IMR-90 (cell line): ENCODE measurements at regions of chr11 and their contacts with region 1.

Region 1: GRCh38 chr11:111299101-111300026 is 1.0 kb downstream of the POU2AF3 start:
- DNase-seq: peak; percentile 23
- ATAC-seq: peak; percentile 96
- H3K4me3 ChIP-seq: peak overlapping the region; percentile 49
- H3K27ac ChIP-seq: no peak overlapping the region
- H3K4me1 ChIP-seq: no peaks in the 10 kb centered on the region; the same call in 1 of the 2 replicates
- H3K27me3 ChIP-seq: peaks cover 53% of the 10 kb centered on the region
- CTCF ChIP-seq: peak; percentile 50
- POLR2A ChIP-seq: no peak
- RAD21 ChIP-seq: peak; percentile 55

Region 2: GRCh38 chr11:111379602-111380136 is 80.3 kb after region 1 on chr11:
- CTCF ChIA-PET with region 1: no interaction called
- POLR2A ChIA-PET with region 1: no interaction called
- dilution Hi-C with region 1: no loop called
- in situ Hi-C with region 1: no loop called
- intact Hi-C with region 1: loop called (anchors 5 kb)
- DNase-seq: no peak
- ATAC-seq: no peak
- H3K4me3 ChIP-seq: no peak overlapping the region
- H3K27ac ChIP-seq: no peak overlapping the region
- H3K4me1 ChIP-seq: 0 out of 2 replicates have a peak, but pooled peaks cover 1% of the 10 kb centered on the region
- H3K27me3 ChIP-seq: peaks cover 8% of the 10 kb centered on the region
- CTCF ChIP-seq: no peak
- POLR2A ChIP-seq: no peak
- RAD21 ChIP-seq: no peak

Region 3: DNA sequence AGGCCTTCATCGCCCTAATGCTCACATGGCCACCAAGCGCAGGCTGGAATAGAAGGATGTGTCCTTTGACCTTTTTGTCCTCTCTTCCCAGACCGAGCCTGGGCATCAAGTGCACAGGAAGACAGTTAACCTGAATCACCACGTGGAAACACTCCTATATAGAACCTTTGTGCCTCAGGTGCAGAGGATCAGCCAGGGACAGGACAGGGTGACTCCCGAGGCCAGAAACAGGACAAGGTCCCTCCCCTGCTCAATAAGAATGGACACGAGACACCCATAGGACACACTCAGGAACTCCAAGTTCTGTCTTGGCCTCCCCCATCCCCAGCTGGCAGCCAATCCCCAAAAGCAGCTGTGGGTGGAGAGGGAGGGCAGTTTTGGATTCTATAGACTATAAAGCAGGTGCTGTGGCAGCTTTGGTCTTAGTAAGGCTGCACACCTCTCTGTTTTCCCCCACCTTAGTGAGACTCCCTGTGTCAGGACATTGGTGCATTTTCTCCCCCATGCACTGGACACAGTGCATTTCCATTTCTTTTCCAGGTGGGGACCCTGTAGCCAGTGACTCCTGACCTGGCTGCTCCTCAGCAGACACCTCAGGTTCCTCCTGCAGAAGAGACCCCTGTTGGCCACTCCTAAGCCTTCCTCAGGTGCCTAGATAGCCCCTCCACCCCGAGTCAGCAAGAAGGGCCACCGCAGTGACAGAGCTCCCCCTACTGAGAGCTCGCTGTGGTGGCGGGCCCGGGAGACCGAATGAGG is 123.3 kb after region 1 on chr11:
- CTCF ChIA-PET with region 1: interaction called, 3 read pairs
- POLR2A ChIA-PET with region 1: no interaction called
- dilution Hi-C with region 1: no loop called
- in situ Hi-C with region 1: no loop called
- intact Hi-C with region 1: loop called (anchors 5 kb)
- DNase-seq: peak; percentile 26
- ATAC-seq: peak; percentile 95
- H3K4me3 ChIP-seq: no peak overlapping the region
- H3K27ac ChIP-seq: no peak overlapping the region
- H3K4me1 ChIP-seq: peaks cover 2% of the 10 kb centered on the region; the same call in 1 of the 2 replicates
- H3K27me3 ChIP-seq: peaks cover 16% of the 10 kb centered on the region
- CTCF ChIP-seq: peak; percentile 82
- POLR2A ChIP-seq: no peak
- RAD21 ChIP-seq: peak; percentile 82